ENCODE measurements at regions of chr1 and their contacts with region 1.

Region 1: GRCh38 chr1:201511941-201512539 is 5.1 kb upstream of the CSRP1 start:
- DNase-seq: no peak
- ATAC-seq: no peak
- H3K4me3 ChIP-seq: no peak overlapping the region
- H3K4me3 Mint-ChIP-seq: no peak overlapping the region
- H3K27ac ChIP-seq: no peak overlapping the region
- H3K27ac Mint-ChIP-seq: no peak overlapping the region
- H3K4me1 ChIP-seq: peaks cover 7 to 11% of the 10 kb centered on the region in 2 donors
- H3K4me1 Mint-ChIP-seq: peaks cover 20% of the 10 kb centered on the region
- H3K27me3 ChIP-seq: no peaks in the 10 kb centered on the region
- H3K27me3 Mint-ChIP-seq: no peaks in the 10 kb centered on the region
- CTCF ChIP-seq: no peak

Region 2: GRCh38 chr1:200405260-200405659 is 1106.8 kb before region 1 on chr1:
- CTCF ChIA-PET with region 1: no interaction called
- POLR2A ChIA-PET with region 1: no interaction called
- intact Hi-C with region 1: no loop called
- DNase-seq: no peak
- ATAC-seq: no peak
- H3K4me3 ChIP-seq: no peak overlapping the region
- H3K4me3 Mint-ChIP-seq: no peak overlapping the region
- H3K27ac ChIP-seq: no peak overlapping the region
- H3K27ac Mint-ChIP-seq: no peak overlapping the region
- H3K4me1 ChIP-seq: peaks cover 32 to 34% of the 10 kb centered on the region in 2 donors
- H3K4me1 Mint-ChIP-seq: peaks cover 50% of the 10 kb centered on the region
- H3K27me3 ChIP-seq: no peaks in the 10 kb centered on the region
- H3K27me3 Mint-ChIP-seq: no peaks in the 10 kb centered on the region
- CTCF ChIP-seq: no peak

Region 3: GRCh38 chr1:201436393-201436792 is 75.6 kb before region 1 on chr1:
- CTCF ChIA-PET with region 1: interaction called, 34 read pairs
- POLR2A ChIA-PET with region 1: no interaction called
- intact Hi-C with region 1: no loop called
- DNase-seq: no peak
- ATAC-seq: no peak
- H3K4me3 ChIP-seq: no peak overlapping the region
- H3K4me3 Mint-ChIP-seq: no peak overlapping the region
- H3K27ac ChIP-seq: no peak overlapping the region
- H3K27ac Mint-ChIP-seq: no peak overlapping the region
- H3K4me1 ChIP-seq: peaks cover 3 to 7% of the 10 kb centered on the region in 2 donors
- H3K4me1 Mint-ChIP-seq: peaks cover 7% of the 10 kb centered on the region
- H3K27me3 ChIP-seq: peaks cover 0 to 13% (median 4%) of the 10 kb centered on the region in 4 experiments
- H3K27me3 Mint-ChIP-seq: peaks cover 26% of the 10 kb centered on the region
- CTCF ChIP-seq: no peak

Region 4: DNA sequence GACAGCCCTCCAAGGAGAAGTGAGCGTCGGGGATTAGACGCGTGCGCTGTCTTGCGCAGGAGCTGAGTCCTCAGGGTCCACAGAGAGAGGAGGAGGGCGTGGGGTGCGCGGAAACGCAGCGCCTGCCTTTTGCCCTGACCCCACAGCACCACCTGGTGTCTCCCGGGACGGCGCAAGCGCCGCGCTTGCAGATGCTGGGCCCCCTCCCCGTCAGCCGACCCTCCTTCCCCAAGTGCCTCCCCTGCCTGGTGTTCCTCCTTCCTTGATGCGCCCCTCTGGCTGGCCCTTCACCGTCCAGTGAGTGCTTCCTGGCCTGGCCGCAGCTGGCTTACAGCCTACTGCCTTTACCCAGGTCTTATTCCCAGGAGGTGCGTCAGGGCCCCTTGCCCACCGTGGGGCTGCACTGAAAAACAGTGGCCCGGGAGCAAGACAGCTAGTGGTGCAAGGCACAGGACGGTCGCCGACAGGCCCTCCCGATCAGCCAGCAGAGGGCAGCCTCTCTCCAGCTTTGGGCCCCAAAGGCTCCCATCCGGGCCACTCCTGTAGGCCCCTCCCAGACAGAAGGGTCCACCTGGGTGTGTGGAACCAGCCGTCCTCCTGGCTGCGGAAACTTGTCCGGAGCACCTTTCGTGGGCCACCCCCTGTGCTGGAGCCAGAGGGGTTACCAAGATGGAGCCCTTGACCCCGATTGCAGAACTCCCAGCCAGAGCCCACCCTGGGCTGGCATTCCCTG is 30.1 kb before region 1 on chr1:
- CTCF ChIA-PET with region 1: interaction called, 407 read pairs
- POLR2A ChIA-PET with region 1: interaction called, 4 read pairs
- intact Hi-C with region 1: loop called (anchors 1 kb)
- DNase-seq: peak; percentile 85
- ATAC-seq: peak; percentile 81
- H3K4me3 ChIP-seq: peak overlapping the region in 4 of 5 experiments; percentile 14 to 67 (median 52)
- H3K4me3 Mint-ChIP-seq: peak overlapping the region; percentile 87
- H3K27ac ChIP-seq: no peak overlapping the region
- H3K27ac Mint-ChIP-seq: peak overlapping the region; percentile 70
- H3K4me1 ChIP-seq: peaks cover 14 to 25% of the 10 kb centered on the region in 2 donors
- H3K4me1 Mint-ChIP-seq: peaks cover 26% of the 10 kb centered on the region
- H3K27me3 ChIP-seq: peaks cover 0 to 13% (median 0%) of the 10 kb centered on the region in 4 experiments
- H3K27me3 Mint-ChIP-seq: no peaks in the 10 kb centered on the region
- CTCF ChIP-seq: peak; percentile 93

Region 5: DNA sequence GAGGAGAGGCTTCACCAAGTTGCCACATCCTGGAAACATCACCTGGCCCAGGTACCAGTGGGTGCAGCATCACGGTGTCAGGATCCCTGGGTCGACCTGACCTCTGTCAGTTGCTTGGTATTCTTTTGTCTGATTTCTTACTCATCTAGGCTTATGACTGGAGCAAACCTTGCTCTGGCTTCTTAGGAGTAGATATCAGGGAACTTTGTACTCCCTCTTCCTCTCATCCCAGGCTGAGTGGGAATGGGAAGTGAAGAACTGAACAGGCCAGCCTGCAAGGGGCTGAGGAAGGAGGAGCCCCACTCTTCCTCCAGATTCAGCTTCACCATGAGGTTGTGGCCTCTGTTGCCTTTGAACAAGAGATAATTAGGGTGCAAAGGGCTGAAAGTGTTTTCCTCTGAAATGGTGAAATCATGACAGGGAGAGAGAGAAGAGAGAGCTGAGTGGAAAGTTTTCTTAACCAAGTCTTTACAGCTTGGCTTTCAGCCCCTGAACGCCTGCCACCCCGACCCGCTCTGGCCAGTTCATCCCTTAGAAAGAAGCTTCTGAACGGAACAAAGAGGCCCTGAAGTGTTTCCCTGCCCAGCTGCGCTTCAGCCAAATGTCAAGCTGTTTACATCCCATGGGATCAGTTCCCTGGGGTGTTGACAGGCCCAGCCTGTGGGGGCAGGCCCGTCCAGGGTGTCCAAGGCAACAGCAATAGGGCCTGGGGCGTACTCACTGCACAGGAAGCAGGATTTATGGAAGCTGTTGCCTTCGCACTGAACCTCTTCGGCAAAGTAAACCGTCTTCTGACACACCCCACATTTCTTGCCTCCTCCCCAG is 16.4 kb before region 1 on chr1:
- CTCF ChIA-PET with region 1: interaction called, 59 read pairs
- POLR2A ChIA-PET with region 1: no interaction called
- intact Hi-C with region 1: no loop called
- DNase-seq: no peak
- ATAC-seq: no peak
- H3K4me3 ChIP-seq: no peak overlapping the region
- H3K4me3 Mint-ChIP-seq: no peak overlapping the region
- H3K27ac ChIP-seq: no peak overlapping the region
- H3K27ac Mint-ChIP-seq: no peak overlapping the region
- H3K4me1 ChIP-seq: no peaks in the 10 kb centered on the region
- H3K4me1 Mint-ChIP-seq: no peaks in the 10 kb centered on the region
- H3K27me3 ChIP-seq: no peaks in the 10 kb centered on the region
- H3K27me3 Mint-ChIP-seq: no peaks in the 10 kb centered on the region
- CTCF ChIP-seq: no peak

Region 6: DNA sequence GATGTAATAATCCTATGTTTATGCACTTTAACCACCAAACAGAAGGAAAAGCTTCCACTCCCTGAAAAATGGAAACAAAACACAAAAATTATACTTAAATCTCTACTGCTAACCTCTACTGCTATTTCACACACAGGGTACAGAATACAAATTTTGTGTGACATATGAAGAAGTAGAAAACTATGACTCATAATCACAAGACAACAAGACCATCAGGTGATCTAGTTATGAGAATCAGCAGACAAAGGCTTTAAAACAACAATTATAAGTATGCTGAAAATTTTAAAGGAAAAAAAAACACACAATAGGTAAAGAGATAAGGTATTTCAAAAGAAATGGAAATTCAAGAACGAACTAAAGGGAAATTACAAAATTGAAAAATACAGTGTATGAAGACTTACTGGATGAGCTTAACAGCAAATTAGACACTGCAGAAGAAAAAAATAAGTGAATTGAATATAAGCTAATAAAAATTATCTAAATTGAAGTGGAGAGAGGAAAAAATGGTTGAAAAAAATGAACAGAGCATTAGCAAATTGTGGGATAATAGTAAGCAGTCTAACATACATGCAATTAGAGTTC is 13.2 kb after region 1 on chr1:
- CTCF ChIA-PET with region 1: interaction called, 54 read pairs
- POLR2A ChIA-PET with region 1: no interaction called
- intact Hi-C with region 1: no loop called
- DNase-seq: no peak
- ATAC-seq: no peak
- H3K4me3 ChIP-seq: no peak overlapping the region
- H3K4me3 Mint-ChIP-seq: no peak overlapping the region
- H3K27ac ChIP-seq: no peak overlapping the region
- H3K27ac Mint-ChIP-seq: no peak overlapping the region
- H3K4me1 ChIP-seq: no peaks in the 10 kb centered on the region
- H3K4me1 Mint-ChIP-seq: no peaks in the 10 kb centered on the region
- H3K27me3 ChIP-seq: no peaks in the 10 kb centered on the region
- H3K27me3 Mint-ChIP-seq: no peaks in the 10 kb centered on the region
- CTCF ChIP-seq: no peak

Measured in B cell (primary cell).